Activated CD8-positive, alpha-beta memory T cell treated with anti-CD3 and anti-CD28 coated beads, Interleukin-2, amount 10 ng/mL, durations not matched to agents 7 days and 5 days (primary cell): ENCODE measurements at regions of chr6 and their contacts with region 1.

Region 1: DNA sequence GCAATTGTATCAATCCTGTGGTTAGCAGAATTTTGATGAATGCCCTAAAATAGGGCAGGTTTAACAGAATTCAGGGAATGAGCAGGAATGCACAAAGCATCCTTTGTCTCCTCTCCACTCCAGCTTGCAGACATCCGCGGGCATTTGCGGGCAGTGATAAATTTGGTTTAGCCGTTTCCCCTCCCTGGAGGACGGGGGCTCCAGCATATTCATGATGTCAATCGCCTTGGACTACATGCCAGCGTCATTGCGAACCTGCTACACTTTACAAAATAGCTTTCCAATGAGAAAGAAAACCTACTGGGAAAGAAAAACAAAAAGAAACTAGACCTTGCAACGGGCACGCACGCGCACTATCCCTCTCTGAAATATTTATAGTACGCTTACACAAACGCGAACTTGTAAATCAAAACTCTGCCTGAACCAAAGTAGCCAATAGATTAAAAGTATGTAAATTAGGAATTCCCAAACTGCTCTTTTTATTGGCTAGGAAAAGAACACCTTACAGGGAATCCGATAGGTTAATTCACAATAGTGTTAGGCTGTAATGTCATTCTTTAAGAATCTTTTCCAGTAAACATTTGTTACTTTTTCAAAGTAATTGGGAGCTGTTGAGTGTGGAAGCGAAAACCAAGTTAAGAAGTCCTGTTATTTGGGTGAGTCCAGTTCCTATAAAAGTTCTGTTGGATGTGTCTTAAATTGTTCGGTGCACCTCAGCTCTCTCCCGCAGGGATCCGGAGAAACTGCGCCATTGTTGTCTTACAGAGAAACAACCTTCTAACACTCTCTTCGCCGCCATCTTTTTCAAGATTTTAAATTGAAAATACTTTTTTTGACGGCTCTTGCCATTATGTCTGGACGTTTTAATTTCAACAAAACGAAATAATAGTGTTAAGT is 136.7 kb downstream of the HFE start:
- DNase-seq: peak; percentile 78
- ATAC-seq: peak; percentile 84
- H3K4me3 Mint-ChIP-seq: no peak overlapping the region
- H3K27ac Mint-ChIP-seq: no peak overlapping the region
- H3K4me1 Mint-ChIP-seq: peaks cover 31% of the 10 kb centered on the region
- H3K27me3 Mint-ChIP-seq: no peaks in the 10 kb centered on the region

Region 2: GRCh38 chr6:26097268-26097875 is 126.5 kb before region 1 on chr6:
- CTCF ChIA-PET with region 1: no interaction called
- DNase-seq: peak; percentile 73
- ATAC-seq: peak; percentile 90
- H3K4me3 Mint-ChIP-seq: no peak overlapping the region
- H3K27ac Mint-ChIP-seq: no peak overlapping the region
- H3K4me1 Mint-ChIP-seq: peaks cover 9% of the 10 kb centered on the region
- H3K27me3 Mint-ChIP-seq: peaks cover 8% of the 10 kb centered on the region

Region 3: GRCh38 chr6:26234421-26235296 is 10.8 kb after region 1 on chr6:
- CTCF ChIA-PET with region 1: interaction called, 15 read pairs
- DNase-seq: peak; percentile 89
- ATAC-seq: peak; percentile 67
- H3K4me3 Mint-ChIP-seq: peak overlapping the region; percentile 82
- H3K27ac Mint-ChIP-seq: peak overlapping the region; percentile 98
- H3K4me1 Mint-ChIP-seq: peaks cover 38% of the 10 kb centered on the region
- H3K27me3 Mint-ChIP-seq: peaks cover 2% of the 10 kb centered on the region